Body of pancreas (tissue), 4 donors: ENCODE measurements at regions of chr5 and their contacts with region 1.

Region 1: DNA sequence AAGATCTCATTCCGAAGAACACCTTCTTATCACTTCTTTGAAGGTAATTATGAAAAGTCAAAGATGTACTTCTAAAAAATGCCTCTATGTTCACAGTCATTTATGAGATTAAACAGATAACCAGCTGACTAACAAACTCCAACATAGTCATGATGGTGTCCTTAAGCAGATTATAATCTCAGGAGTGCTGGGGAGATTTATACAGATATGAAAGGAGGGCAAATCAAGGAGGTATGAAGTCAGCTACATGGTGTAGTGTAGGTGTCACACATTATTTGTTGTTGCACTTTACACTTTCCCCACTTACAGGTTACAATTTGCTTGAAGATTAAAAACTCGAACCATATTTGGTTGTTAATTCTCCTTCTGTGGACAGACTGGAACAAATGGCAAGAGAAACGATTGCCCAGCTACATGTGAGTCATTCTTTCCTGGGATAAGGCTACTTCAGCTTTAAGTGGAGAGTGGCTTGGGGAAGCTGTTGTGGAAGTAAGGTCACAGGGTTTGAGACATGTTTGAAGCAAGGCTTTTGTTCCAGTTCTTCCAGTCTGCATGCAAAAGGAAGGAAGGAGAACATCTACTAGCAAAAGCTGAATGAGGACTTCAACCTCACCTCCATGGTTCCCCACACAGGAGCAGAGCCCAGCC is 320.1 kb downstream of the ADGRV1 start:
- DNase-seq: peak in 2 of 4 donors; percentile 25 to 26
- ATAC-seq: peak; percentile 58
- H3K4me3 ChIP-seq: no peak overlapping the region
- H3K27ac ChIP-seq: peak overlapping the region in 2 of 4 donors; percentile 9 to 42
- H3K4me1 ChIP-seq: peaks cover 15% of the 10 kb centered on the region
- H3K27me3 ChIP-seq: no peaks in the 10 kb centered on the region
- CTCF ChIP-seq: no peak
- POLR2A ChIP-seq: no peak

Region 2: GRCh38 chr5:90911169-90911568 is 32.5 kb after region 1 on chr5:
- intact Hi-C with region 1: no loop called
- DNase-seq: no peak
- ATAC-seq: no peak
- H3K4me3 ChIP-seq: no peak overlapping the region
- H3K27ac ChIP-seq: no peak overlapping the region
- H3K4me1 ChIP-seq: peaks cover 10% of the 10 kb centered on the region
- H3K27me3 ChIP-seq: no peaks in the 10 kb centered on the region
- CTCF ChIP-seq: no peak
- POLR2A ChIP-seq: no peak

Region 3: GRCh38 chr5:91225848-91226686 is 347.4 kb after region 1 on chr5:
- intact Hi-C with region 1: loop called (anchors 10 kb)
- DNase-seq: peak; percentile 64 to 73 (median 68)
- ATAC-seq: peak; percentile 71
- H3K4me3 ChIP-seq: no peak overlapping the region
- H3K27ac ChIP-seq: no peak overlapping the region
- H3K4me1 ChIP-seq: no peaks in the 10 kb centered on the region
- H3K27me3 ChIP-seq: no peaks in the 10 kb centered on the region
- CTCF ChIP-seq: peak; percentile 36 to 75 (median 67)
- POLR2A ChIP-seq: no peak